CD8-positive, alpha-beta T cell (primary cell): ENCODE measurements at regions of chr22 and their contacts with region 1.

Region 1: GRCh38 chr22:45318168-45318557 is 8.4 kb downstream of the FAM118A start:
- DNase-seq: peak; percentile 78 to 98 (median 90)
- ATAC-seq: peak; percentile 65
- H3K4me3 ChIP-seq: peak overlapping the region; percentile 30 to 38
- H3K4me3 Mint-ChIP-seq: peak overlapping the region; percentile 81
- H3K27ac ChIP-seq: peak overlapping the region; percentile 97 to 98
- H3K27ac Mint-ChIP-seq: peak overlapping the region; percentile 100
- H3K4me1 ChIP-seq: peaks cover 34% of the 10 kb centered on the region
- H3K4me1 Mint-ChIP-seq: peaks cover 74% of the 10 kb centered on the region
- H3K27me3 ChIP-seq: no peaks in the 10 kb centered on the region
- H3K27me3 Mint-ChIP-seq: no peaks in the 10 kb centered on the region
- CTCF ChIP-seq: no peak

Region 2: DNA sequence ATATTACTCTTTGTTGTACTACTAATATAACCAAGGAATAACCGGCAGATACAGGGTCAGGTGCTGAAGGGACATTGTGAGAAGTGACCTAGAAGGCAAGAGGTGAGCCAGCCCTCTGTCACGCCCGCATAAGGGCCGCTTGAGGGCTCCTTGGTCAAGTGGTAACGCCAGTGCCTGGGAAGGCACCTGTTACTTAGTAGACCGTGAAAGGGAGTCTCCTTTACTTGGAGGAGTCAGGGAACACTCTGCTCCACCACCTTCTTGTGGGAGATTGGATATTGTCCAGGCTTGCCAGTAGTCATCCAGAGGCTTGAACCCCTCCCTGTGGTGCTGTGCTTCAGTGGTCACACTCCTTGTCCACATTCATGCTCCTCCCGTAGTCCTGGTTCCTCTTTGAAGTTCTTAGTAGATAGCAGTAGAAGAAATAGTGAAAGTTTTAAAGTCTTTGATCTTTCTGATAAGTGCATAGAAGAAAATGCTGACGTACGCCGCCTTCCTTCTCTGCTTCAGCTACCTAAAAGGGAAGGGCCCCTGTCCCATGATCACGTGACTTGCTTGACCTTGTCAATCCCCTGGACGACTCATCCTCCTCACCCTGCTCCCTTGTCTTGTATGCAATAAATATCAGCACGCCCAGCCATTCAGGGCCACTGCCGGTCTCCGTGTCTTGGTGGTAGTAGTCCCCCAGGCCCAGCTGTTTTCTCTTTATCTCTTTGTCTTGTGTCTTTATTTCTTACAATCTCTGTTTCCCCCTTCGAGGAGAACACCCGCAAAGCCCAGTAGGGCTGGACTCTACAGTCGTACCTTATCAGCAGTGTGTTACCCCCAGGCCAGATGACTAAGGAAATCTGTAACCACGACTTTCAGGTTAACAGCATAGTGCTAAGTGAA is 148.3 kb before region 1 on chr22:
- CTCF ChIA-PET with region 1: no interaction called
- POLR2A ChIA-PET with region 1: no interaction called
- intact Hi-C with region 1: loop called in 1 of 2 experiments (anchors 5 kb)
- DNase-seq: peak in 2 of 9 experiments; percentile 26 to 39
- ATAC-seq: no peak
- H3K4me3 ChIP-seq: no peak overlapping the region
- H3K4me3 Mint-ChIP-seq: peak overlapping the region; percentile 66
- H3K27ac ChIP-seq: no peak overlapping the region
- H3K27ac Mint-ChIP-seq: peak overlapping the region; percentile 89
- H3K4me1 ChIP-seq: peaks cover 67% of the 10 kb centered on the region
- H3K4me1 Mint-ChIP-seq: peaks cover 81% of the 10 kb centered on the region
- H3K27me3 ChIP-seq: no peaks in the 10 kb centered on the region
- H3K27me3 Mint-ChIP-seq: no peaks in the 10 kb centered on the region
- CTCF ChIP-seq: no peak

Region 3: DNA sequence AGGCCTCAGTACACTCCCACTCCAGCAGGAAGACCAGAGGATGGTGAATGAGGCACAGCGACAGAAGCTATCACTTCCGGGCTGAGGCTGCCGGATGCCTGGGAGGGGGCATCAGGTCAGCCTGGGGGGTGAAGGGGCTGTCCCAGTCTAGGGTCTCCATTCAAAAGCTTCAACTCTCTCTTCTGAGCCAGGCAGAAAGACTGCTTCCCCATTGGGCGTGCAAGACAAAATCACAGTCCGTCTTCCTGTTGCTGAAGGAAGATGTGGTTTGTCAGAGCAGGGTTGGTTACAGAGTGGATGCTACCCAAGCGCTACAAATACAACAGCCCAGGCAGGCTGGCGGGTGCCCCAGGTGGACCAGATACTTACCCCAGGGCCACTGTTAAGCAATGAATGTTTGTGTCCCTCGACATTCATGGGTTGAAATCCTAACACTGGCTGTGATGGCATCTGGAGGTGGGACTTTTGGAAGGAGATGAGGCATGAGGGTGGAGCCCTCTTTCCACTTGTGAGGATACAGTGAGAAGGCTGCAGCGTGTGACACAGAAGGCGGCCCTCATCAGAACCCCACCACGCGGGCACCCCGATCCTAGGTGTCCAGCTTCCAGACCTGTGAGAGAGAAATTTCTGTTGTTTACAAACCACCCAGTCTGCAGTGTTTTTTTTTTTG is 21.4 kb before region 1 on chr22:
- CTCF ChIA-PET with region 1: interaction called, 3 read pairs
- POLR2A ChIA-PET with region 1: interaction called, 3 read pairs
- intact Hi-C with region 1: loop called in 1 of 2 experiments (anchors 1 kb)
- DNase-seq: peak in 8 of 9 experiments; percentile 27 to 76 (median 50)
- ATAC-seq: peak; percentile 93
- H3K4me3 ChIP-seq: no peak overlapping the region
- H3K4me3 Mint-ChIP-seq: peak overlapping the region; percentile 58
- H3K27ac ChIP-seq: peak overlapping the region; percentile 39 to 52
- H3K27ac Mint-ChIP-seq: peak overlapping the region; percentile 91
- H3K4me1 ChIP-seq: peaks cover 20% of the 10 kb centered on the region
- H3K4me1 Mint-ChIP-seq: peaks cover 25% of the 10 kb centered on the region
- H3K27me3 ChIP-seq: no peaks in the 10 kb centered on the region
- H3K27me3 Mint-ChIP-seq: no peaks in the 10 kb centered on the region
- CTCF ChIP-seq: no peak

Region 4: GRCh38 chr22:45344334-45344733 is 26.2 kb after region 1 on chr22:
- CTCF ChIA-PET with region 1: no interaction called
- POLR2A ChIA-PET with region 1: interaction called, 3 read pairs
- intact Hi-C with region 1: loop called in 1 of 2 experiments (anchors 1 kb)
- DNase-seq: no peak
- ATAC-seq: no peak
- H3K4me3 ChIP-seq: no peak overlapping the region
- H3K4me3 Mint-ChIP-seq: no peak overlapping the region
- H3K27ac ChIP-seq: no peak overlapping the region
- H3K27ac Mint-ChIP-seq: peak overlapping the region; percentile 52
- H3K4me1 ChIP-seq: peaks cover 19% of the 10 kb centered on the region
- H3K4me1 Mint-ChIP-seq: peaks cover 24% of the 10 kb centered on the region
- H3K27me3 ChIP-seq: no peaks in the 10 kb centered on the region
- H3K27me3 Mint-ChIP-seq: no peaks in the 10 kb centered on the region
- CTCF ChIP-seq: no peak